Activated T-helper 2 cell treated with anti-CD3 and anti-CD28 coated beads, Interferon-gamma antibody, Interleukin-2, Interleukin-4, amounts not matched to agents 10 μg/mL and 5 μg/mL and 100 μg/mL, durations not matched to agents 14 hours and 24 hours and 36 hours (primary cell): ENCODE measurements at regions of chr6 and their contacts with region 1.

Region 1: DNA sequence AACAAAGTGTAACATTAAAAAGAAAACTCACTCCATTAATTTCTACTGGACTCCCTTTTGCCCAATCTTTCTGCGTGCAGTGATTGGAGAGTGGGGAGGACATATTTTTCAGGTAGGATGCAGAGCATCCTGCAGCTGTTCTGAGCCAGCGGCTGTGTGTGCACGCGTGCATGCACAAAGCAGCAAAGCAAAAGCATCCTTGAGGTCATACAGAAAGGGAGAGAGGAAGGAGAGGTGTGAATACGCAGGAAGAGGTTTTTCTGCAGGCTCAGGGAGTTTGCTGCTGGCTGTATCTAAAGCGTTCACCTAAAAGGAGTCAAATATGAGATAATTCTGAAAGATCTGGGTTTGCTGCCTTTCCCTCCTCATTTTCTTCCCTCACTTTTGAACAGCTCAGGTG is 108.4 kb downstream of the HUS1B start:
- DNase-seq: no peak
- H3K4me3 Mint-ChIP-seq: peak overlapping the region; percentile 75
- H3K27ac Mint-ChIP-seq: peak overlapping the region; percentile 99
- H3K4me1 Mint-ChIP-seq: peaks cover 75% of the 10 kb centered on the region
- H3K27me3 Mint-ChIP-seq: no peaks in the 10 kb centered on the region

Region 2: GRCh38 chr6:291697-292505 is 256.6 kb before region 1 on chr6 and contains the start of gene DUSP22:
- intact Hi-C with region 1: loop called (anchors 5 kb)
- DNase-seq: peak; percentile 78
- H3K4me3 Mint-ChIP-seq: peak within 1 kb of the TSS; percentile 91
- H3K27ac Mint-ChIP-seq: peak within 1 kb of the TSS; percentile 95
- H3K4me1 Mint-ChIP-seq: peaks cover 45% of the 10 kb centered on the region
- H3K27me3 Mint-ChIP-seq: no peaks in the 10 kb centered on the region
- total RNA-seq, gene DUSP22: 27.5 and 28.6 TPM in 2 replicates

Region 3: GRCh38 chr6:399785-400534 is 148.6 kb before region 1 on chr6:
- intact Hi-C with region 1: loop called (anchors 1 kb)
- DNase-seq: peak; percentile 57
- H3K4me3 Mint-ChIP-seq: peak overlapping the region; percentile 72
- H3K27ac Mint-ChIP-seq: peak overlapping the region; percentile 78
- H3K4me1 Mint-ChIP-seq: peaks cover 86% of the 10 kb centered on the region
- H3K27me3 Mint-ChIP-seq: no peaks in the 10 kb centered on the region

Region 4: DNA sequence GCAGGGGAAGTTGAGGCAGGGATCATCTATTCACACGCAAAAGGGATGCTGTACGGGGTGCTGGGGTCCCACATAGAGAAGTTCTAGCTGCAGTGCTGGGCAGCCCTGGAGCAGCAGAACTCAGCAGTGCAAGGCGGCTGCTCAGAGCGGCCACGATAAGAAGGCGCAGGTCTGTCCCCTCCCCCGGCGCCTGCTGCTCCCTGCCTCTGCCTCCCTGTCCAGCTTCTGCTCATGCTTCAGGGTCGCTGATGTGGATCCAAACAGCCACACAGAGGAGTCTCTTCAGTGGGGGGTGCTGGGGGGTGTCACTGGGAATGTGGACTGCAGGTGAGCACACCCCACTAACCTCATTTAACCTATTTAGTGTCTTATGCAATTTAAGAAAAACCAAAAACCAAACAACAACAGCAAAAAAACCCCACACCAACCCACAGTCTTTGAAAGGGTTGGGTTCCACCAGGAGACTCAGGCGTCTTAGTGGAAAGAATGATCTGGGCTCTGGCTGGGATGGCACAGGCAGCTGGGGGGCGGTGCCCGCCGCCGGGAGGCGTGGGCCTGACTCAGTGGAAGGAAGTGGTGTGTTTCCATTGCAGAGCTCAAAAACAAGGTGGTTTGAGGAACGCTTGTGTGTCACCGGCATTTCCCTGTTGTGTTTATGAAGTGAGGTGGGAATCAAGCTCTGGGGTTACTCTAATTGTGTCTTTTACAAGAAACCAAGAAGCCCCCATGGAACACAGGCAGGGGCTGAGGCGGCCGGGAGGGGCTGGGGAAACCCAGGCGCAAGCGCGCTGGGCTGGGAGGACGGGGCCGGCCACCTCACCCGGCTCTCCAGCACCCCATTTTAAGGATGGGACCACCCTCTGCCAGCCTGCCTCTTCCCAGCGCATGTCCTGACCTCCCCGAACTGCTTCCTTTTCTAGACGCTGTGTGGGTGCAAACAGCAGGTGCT is 101.8 kb before region 1 on chr6:
- intact Hi-C with region 1: loop called (anchors 1 kb)
- DNase-seq: peak; percentile 88
- H3K4me3 Mint-ChIP-seq: peak overlapping the region; percentile 40
- H3K27ac Mint-ChIP-seq: peak overlapping the region; percentile 91
- H3K4me1 Mint-ChIP-seq: peaks cover 54% of the 10 kb centered on the region
- H3K27me3 Mint-ChIP-seq: no peaks in the 10 kb centered on the region

Region 5: DNA sequence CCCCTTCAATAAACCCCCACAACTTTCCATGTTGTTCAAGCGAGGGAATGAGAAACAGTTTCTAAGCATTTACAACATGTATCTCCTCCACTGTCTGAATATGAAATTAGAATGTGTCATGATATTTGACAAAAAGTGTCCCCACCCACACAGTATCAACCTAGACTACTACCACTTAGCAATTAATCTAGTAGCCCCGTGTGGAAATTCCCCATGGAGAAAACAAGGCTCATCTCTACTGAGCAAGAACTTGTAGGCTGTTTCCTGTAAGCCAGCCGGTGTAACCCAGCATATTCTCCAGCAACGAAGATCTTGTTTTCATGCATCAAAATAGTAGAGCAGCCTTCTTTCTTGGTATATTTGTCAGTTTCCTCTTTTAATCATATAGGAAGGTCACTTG is 42.0 kb before region 1 on chr6:
- intact Hi-C with region 1: loop called (anchors 1 kb)
- DNase-seq: no peak
- H3K4me3 Mint-ChIP-seq: peak overlapping the region; percentile 38
- H3K27ac Mint-ChIP-seq: peak overlapping the region; percentile 95
- H3K4me1 Mint-ChIP-seq: peaks cover 94% of the 10 kb centered on the region
- H3K27me3 Mint-ChIP-seq: no peaks in the 10 kb centered on the region

Region 6: GRCh38 chr6:568954-569523 is 20.5 kb after region 1 on chr6:
- intact Hi-C with region 1: loop called (anchors 1 kb)
- DNase-seq: no peak
- H3K4me3 Mint-ChIP-seq: peak overlapping the region; percentile 26
- H3K27ac Mint-ChIP-seq: peak overlapping the region; percentile 82
- H3K4me1 Mint-ChIP-seq: peaks cover 65% of the 10 kb centered on the region
- H3K27me3 Mint-ChIP-seq: no peaks in the 10 kb centered on the region

Region 7: GRCh38 chr6:692855-693722 is 144.6 kb after region 1 on chr6 and contains the start of gene EXOC2:
- intact Hi-C with region 1: no loop called
- DNase-seq: peak; percentile 84
- H3K4me3 Mint-ChIP-seq: peak within 1 kb of the TSS; percentile 96
- H3K27ac Mint-ChIP-seq: peak within 1 kb of the TSS; percentile 85
- H3K4me1 Mint-ChIP-seq: peaks cover 24% of the 10 kb centered on the region
- H3K27me3 Mint-ChIP-seq: no peaks in the 10 kb centered on the region
- total RNA-seq, gene EXOC2: 53.3 and 53.9 TPM in 2 replicates